ENCODE measurements at regions of chr11 and their contacts with region 1.

Region 1: GRCh38 chr11:92340839-92341238 is 116.2 kb downstream of the FAT3 start:
- DNase-seq: peak; percentile 53

Region 2: GRCh38 chr11:92322225-92322624 is 18.6 kb before region 1 on chr11:
- CTCF ChIA-PET with region 1: no interaction called
- POLR2A ChIA-PET with region 1: no interaction called
- DNase-seq: no peak

Region 3: DNA sequence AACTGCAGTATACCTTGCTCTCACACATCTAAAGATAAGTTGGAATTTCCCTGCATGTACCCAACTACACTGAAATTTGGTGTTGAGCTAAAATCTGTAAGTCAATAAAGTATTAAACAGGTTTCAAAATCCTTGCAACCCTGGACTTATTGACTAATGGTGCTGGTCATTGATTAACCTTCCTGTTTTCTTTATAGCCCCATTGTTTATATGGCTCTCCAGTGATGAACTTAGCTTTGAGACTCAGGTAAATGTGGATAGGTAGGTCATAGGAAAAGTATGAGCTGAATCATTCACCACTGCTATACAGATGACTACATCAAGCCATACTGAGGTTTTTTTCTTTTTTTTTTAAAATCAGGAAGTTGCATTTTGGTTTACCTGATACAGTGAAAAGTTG is 16.5 kb after region 1 on chr11:
- CTCF ChIA-PET with region 1: interaction called, 12 read pairs
- POLR2A ChIA-PET with region 1: no interaction called
- DNase-seq: no peak

Region 4: GRCh38 chr11:92406482-92406881 is 65.6 kb after region 1 on chr11:
- CTCF ChIA-PET with region 1: no interaction called
- POLR2A ChIA-PET with region 1: no interaction called
- DNase-seq: no peak

Region 5: GRCh38 chr11:92424281-92424680 is 83.4 kb after region 1 on chr11:
- CTCF ChIA-PET with region 1: no interaction called
- POLR2A ChIA-PET with region 1: no interaction called
- DNase-seq: no peak

Measured in HEK293T (cell line).